Heart left ventricle (tissue), 16 donors: ENCODE measurements at regions of chr1 and their contacts with region 1.

Region 1: DNA sequence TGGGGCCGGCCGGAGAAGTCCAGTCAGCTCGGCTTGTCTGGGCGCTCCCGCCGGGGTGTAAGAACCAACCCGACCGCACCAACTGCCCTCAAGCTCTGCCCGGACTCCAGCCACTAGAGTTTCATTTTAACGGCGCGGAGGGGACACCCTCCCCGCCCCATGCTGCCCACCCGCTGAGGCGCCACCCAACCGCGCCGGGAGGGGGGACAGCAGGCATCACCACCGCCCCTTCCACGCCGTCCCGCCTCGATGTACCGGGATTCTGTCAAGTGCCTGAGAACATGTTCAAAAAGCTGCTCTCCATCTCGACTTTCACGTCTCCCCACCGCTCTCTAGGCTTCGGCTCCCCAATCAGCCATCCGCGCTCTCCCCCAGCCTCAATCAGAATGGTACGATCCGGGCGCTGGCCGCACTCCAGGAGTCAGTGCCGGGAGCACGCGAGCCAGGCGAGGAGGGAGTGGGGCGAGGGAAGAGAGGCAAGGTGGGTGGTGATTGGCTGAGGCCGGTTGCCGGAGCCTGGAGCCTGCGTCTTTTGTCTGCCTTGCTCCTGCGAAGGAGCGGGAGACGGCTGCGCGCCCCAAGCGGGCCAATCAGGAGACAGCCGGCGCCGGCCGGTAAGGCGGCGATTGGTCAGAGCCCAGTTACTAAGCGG is at the start of gene PIK3R3:
- DNase-seq: peak; percentile 98 to 99 (median 99)
- ATAC-seq: peak; percentile 97 to 99 (median 98)
- H3K4me3 ChIP-seq: peak within 1 kb of the TSS; percentile 54 to 89 (median 74)
- H3K27ac ChIP-seq: peak within 1 kb of the TSS; percentile 89 to 98 (median 96)
- H3K4me1 ChIP-seq: peaks cover 4 to 52% (median 30%) of the 10 kb centered on the region in 12 donors
- H3K27me3 ChIP-seq: peaks cover 0 to 9% (median 0%) of the 10 kb centered on the region in 9 donors
- CTCF ChIP-seq: peak in 4 of 12 donors; percentile 8 to 41 (median 40)
- POLR2A ChIP-seq: peak; percentile 86 to 99
- total RNA-seq, gene PIK3R3: 24.6 to 54.1 (median 41.9) TPM

Region 2: GRCh38 chr1:45686317-45687013 is 446.2 kb before region 1 on chr1 and contains the start of gene GPBP1L1:
- intact Hi-C with region 1: loop called in 1 of 10 experiments (anchors 2 kb)
- DNase-seq: peak; percentile 98 to 99 (median 98)
- ATAC-seq: peak; percentile 89 to 93 (median 92)
- H3K4me3 ChIP-seq: peak within 1 kb of the TSS; percentile 75 to 99 (median 93)
- H3K27ac ChIP-seq: peak within 1 kb of the TSS; percentile 91 to 99 (median 95)
- H3K4me1 ChIP-seq: peaks cover 6 to 55% (median 41%) of the 10 kb centered on the region in 12 donors
- H3K27me3 ChIP-seq: no peaks in the 10 kb centered on the region
- CTCF ChIP-seq: no peak
- POLR2A ChIP-seq: peak in 1 of 2 donors; percentile 76
- total RNA-seq, gene GPBP1L1: 73.8 to 94.2 (median 78.1) TPM

Region 3: DNA sequence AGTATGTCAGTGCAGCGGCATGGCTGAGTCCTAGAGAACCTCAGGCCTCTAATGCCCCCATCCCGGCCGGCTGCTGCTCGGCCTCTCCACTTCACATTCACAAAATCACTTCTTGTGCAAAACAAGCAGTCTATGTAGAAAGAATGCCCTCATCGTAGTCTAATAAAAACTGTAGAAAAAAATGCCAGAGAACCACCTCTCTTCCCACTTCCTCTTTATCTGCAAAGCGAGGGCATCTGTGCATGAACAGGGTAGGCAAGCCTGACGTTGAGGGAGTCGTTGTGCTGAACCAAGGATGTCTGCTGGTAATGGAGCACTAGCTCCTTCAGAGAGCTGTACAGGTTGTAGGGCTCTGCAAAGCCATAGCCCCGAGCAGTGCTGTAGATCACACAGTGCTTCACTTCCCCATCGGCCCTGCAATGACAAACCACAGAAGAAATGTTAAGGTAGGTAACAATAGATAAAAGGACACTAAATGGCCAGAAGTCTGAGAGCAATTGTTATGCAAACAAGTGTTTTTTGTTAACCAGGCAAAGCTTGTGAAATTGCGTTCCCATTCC is 89.1 kb before region 1 on chr1:
- intact Hi-C with region 1: loop called in 7 of 10 experiments (anchors 2 to 5 kb)
- DNase-seq: no peak
- ATAC-seq: no peak
- H3K4me3 ChIP-seq: no peak overlapping the region
- H3K27ac ChIP-seq: no peak overlapping the region
- H3K4me1 ChIP-seq: peaks cover 11 to 52% (median 31%) of the 10 kb centered on the region in 12 donors
- H3K27me3 ChIP-seq: no peaks in the 10 kb centered on the region
- CTCF ChIP-seq: no peak
- POLR2A ChIP-seq: no peak

Region 4: DNA sequence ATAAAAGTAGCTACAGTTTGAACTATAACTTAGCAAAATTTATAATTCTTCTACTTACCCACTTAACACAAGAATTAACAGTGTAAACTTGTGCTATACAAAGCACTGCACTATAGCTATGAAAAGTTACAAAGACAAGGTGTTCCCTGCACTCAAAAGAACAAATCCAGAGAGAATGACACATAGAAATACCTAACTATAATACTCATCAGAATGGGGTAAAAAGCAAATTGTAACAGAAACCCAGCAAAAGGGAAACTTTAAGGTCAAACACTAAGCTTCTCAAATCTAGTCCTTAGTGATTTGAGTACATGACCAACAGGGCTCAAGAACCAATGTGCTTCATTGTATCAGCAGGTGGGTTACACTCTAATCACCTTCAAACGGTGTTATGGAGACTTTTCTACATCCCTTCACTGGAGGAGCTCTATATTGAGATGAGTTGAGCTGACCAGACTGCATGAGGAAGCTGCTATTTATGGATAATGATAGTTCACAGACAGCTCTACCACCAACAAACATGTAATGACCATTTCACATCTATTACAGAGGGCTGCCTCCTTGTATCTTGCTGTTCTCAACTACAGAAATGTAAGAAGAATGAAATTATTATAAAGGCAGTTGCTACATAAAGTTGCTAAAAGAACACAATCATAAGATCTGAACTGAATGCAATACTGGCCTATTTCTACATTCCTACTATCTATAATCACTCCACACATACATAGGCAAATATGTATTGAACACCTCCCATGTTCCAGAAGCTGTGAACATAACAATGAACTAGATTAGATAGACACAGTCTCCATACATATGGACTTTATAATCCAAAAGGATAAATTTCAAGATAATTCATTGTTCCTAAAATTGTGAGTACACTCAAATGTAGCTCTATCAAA is 47.9 kb before region 1 on chr1:
- intact Hi-C with region 1: loop called in 1 of 10 experiments (anchors 5 kb)
- DNase-seq: no peak
- ATAC-seq: peak in 3 of 4 donors; percentile 60 to 70 (median 65)
- H3K4me3 ChIP-seq: no peak overlapping the region
- H3K27ac ChIP-seq: peak overlapping the region in 2 of 12 donors; percentile 2 to 30
- H3K4me1 ChIP-seq: peaks cover 0 to 35% (median 15%) of the 10 kb centered on the region in 12 donors
- H3K27me3 ChIP-seq: no peaks in the 10 kb centered on the region
- CTCF ChIP-seq: no peak
- POLR2A ChIP-seq: no peak

Region 5: DNA sequence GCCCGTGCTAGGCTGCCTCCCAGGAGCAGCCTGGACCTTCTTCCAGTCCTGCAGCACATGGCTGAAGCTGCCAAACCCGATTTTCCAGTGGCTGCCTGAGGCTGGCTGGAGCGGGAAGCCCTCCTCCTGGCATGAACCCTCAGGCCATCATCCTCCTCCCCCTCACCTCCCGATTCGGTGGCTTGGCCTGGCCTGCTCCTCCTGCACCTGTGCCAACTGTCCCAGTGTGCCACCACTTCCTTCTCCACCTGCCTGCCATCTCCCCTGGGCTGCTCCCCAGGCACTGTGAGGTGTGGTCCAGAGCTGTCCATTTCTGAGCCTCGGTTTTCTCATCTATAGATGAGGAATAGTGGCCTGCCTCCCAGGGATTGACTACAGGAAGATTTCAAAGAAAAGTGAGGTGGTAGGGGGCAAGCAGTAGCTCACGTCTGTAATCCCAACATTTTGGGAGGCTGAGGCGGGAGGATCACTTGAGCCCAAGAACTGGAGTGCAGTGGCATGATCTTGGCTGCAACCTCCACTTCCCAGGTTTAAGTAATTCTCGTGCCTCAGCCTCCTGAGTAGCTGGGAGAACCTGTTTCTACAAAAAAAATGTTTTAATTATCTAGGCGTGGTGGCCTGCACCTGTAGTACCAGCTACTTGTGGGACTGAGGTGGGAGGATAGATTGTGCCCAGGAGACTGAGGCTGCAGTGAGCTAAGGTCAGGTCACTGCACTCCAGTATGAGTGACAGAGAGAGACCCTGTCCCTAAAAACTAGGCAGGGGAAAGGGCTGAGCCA is 39.5 kb after region 1 on chr1:
- intact Hi-C with region 1: loop called in 8 of 10 experiments (anchors 1 to 5 kb)
- DNase-seq: peak in 2 of 5 donors; percentile 36 to 54
- ATAC-seq: peak in 1 of 4 donors; percentile 12
- H3K4me3 ChIP-seq: peak overlapping the region in 2 of 12 donors; percentile 6 to 13
- H3K27ac ChIP-seq: peak overlapping the region; percentile 28 to 93 (median 76)
- H3K4me1 ChIP-seq: peaks cover 11 to 82% (median 60%) of the 10 kb centered on the region in 12 donors
- H3K27me3 ChIP-seq: peaks cover 0 to 2% (median 0%) of the 10 kb centered on the region in 9 donors
- CTCF ChIP-seq: no peak
- POLR2A ChIP-seq: no peak